Activated CD8-positive, alpha-beta memory T cell treated with anti-CD3 and anti-CD28 coated beads, Interleukin-2, amount 10 ng/mL, durations not matched to agents 7 days and 5 days (primary cell): ENCODE measurements at regions of chr4 and their contacts with region 1.

Region 1: DNA sequence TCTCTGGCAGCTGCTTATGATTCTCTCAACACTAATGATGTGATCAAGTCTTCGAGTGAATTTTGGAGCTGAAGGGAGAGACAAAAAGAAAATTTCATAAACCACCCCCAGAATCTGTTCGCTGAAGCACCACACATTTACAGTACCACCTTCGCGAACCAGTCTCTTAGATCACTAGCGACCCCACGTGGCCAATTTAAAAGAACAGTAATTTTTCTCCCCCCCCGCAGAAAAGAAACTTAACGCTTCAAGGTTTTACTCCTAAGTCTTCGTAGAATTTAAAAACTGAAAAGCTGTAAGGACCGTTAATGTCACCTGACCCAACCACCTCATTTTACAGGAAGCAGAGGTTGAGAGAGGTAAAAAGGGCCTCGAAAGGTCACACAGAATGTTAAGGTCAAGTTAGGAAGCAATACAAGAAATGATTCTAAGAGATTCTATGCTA is 187.5 kb downstream of the QDPR start:
- DNase-seq: peak; percentile 57
- ATAC-seq: peak; percentile 58
- H3K4me3 Mint-ChIP-seq: peak overlapping the region; percentile 2
- H3K27ac Mint-ChIP-seq: no peak overlapping the region
- H3K4me1 Mint-ChIP-seq: peaks cover 11% of the 10 kb centered on the region
- H3K27me3 Mint-ChIP-seq: no peaks in the 10 kb centered on the region

Region 2: GRCh38 chr4:16916719-16917337 is 407.6 kb before region 1 on chr4:
- CTCF ChIA-PET with region 1: interaction called, 10 read pairs
- DNase-seq: peak; percentile 82
- ATAC-seq: peak; percentile 81
- H3K4me3 Mint-ChIP-seq: no peak overlapping the region
- H3K27ac Mint-ChIP-seq: no peak overlapping the region
- H3K4me1 Mint-ChIP-seq: peaks cover 7% of the 10 kb centered on the region
- H3K27me3 Mint-ChIP-seq: no peaks in the 10 kb centered on the region